Activated naive CD4-positive, alpha-beta T cell treated with anti-CD3 and anti-CD28 coated beads, Interleukin-2, amount 10 ng/mL, durations not matched to agents 7 days and 5 days (primary cell): ENCODE measurements at regions of chr5 and their contacts with region 1.

Region 1: DNA sequence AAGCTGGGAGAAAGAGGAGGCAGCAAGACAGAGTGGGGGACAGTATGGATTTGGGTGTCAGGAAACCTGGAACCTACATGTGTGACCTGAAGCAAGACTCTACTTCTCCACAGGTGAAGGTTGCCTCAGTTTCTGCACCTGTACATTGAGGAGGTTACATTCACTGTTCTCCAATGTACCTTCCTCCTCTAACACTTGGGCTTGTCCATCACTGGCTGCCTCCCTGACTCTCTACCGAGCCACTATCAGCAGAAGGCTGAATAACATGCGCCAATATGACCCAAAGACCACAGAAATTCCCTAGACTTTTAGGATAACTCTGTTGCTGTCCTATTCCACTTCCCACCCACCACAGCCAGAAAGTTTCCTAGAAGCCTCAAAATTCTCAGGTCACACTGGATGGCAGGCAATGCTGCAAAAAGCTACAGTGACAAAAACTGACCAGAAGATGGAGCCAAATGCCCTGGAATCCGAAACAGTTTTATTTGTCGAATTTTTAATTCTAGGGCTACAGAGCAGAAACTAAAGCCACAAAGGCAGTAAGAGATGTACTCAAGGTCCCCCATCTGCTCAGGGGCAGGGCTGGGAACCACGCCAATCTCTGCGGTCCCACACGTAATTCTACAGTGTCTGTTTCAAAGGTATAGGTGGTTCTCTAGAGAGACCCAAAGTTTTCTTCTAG is 64.4 kb downstream of the FAM114A2 start:
- DNase-seq: peak; percentile 56
- H3K4me3 Mint-ChIP-seq: no peak overlapping the region
- H3K27ac Mint-ChIP-seq: no peak overlapping the region
- H3K4me1 Mint-ChIP-seq: no peaks in the 10 kb centered on the region
- H3K27me3 Mint-ChIP-seq: peaks cover 34% of the 10 kb centered on the region

Region 2: DNA sequence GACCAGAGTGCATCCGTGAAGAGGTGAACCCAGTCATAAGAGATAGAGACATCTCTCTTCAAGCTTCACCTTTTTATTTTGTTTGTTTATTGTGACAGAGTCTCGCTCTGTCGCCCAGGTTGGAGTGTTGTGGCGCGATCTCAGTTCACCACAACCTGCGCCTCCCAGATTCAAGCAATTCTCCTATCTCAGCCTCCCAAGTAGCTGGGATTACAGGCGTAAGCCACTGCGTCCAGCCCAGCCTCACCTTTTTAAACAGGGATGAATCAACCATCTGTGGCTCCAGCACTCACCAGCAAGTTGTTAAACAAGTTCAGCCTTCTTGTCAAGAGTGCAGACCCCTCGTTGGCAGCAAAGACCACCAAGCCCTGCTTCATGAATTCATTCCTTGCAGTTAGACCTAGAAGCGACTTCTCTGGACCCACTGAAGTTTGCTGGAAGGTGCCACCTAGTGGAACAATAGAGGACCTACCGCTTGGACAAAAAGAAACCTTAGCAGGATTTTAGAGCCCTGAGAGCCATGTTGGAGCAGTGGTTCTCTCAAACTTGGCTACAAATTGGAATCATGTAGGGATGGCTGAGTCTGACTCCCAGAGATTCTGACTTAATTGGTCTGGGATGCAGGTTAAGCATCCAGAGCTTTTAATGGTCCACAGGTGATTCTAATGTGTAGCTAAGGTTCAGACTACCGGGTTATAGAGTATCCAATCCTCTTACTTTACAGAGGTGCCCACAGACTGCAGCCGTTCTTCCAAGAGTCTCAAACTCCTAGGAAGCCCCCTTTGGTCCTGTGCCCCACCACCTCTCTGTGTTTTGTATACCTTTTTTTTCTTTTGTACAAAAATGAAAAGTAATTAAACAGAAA is 205.8 kb after region 1 on chr5:
- CTCF ChIA-PET with region 1: interaction called, 30 read pairs
- DNase-seq: peak; percentile 52
- H3K4me3 Mint-ChIP-seq: no peak overlapping the region
- H3K27ac Mint-ChIP-seq: no peak overlapping the region
- H3K4me1 Mint-ChIP-seq: peaks cover 8% of the 10 kb centered on the region
- H3K27me3 Mint-ChIP-seq: peaks cover 36% of the 10 kb centered on the region

Region 3: DNA sequence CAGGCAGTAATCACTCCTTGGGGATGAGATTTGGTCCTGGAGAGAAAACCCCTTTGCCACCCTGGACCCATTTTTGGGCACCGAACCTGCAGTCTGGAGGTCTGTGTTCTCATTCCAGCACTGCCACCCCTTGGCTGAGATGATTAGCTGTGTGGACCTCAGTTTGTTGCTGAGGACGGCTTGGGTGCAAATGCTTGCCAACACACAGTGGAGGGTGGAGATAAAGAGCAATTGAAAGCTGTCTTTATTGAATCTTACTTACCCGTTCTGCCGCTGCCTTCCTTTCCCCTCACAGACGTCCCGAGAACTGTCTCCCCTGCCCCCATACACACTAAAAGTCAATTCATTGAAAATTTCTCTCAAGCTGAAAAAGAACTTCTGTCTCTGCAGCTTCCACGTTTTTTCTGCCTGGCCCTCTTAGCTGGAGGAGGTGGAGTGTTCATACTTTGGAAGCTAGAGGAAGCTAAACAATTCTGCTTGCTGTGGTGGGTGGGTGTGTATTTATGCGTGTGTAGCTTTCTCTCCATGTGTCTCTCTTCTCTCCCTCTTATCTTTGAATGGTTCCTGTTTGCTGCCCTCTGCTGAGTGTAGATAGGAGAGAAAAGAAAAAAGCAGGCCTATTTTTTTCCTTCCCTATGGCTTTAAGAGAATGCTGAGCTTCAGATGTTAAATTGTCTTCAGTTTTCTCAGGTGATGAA is 222.8 kb after region 1 on chr5:
- CTCF ChIA-PET with region 1: interaction called, 14 read pairs
- DNase-seq: no peak
- H3K4me3 Mint-ChIP-seq: no peak overlapping the region
- H3K27ac Mint-ChIP-seq: peak overlapping the region; percentile 87
- H3K4me1 Mint-ChIP-seq: peaks cover 63% of the 10 kb centered on the region
- H3K27me3 Mint-ChIP-seq: no peaks in the 10 kb centered on the region

Region 4: GRCh38 chr5:154405078-154405792 is 431.0 kb after region 1 on chr5:
- CTCF ChIA-PET with region 1: interaction called, 32 read pairs
- DNase-seq: peak; percentile 80
- H3K4me3 Mint-ChIP-seq: peak overlapping the region; percentile 15
- H3K27ac Mint-ChIP-seq: no peak overlapping the region
- H3K4me1 Mint-ChIP-seq: peaks cover 8% of the 10 kb centered on the region
- H3K27me3 Mint-ChIP-seq: no peaks in the 10 kb centered on the region